ENCODE measurements at regions of chr18 and their contacts with region 1.

Region 1: DNA sequence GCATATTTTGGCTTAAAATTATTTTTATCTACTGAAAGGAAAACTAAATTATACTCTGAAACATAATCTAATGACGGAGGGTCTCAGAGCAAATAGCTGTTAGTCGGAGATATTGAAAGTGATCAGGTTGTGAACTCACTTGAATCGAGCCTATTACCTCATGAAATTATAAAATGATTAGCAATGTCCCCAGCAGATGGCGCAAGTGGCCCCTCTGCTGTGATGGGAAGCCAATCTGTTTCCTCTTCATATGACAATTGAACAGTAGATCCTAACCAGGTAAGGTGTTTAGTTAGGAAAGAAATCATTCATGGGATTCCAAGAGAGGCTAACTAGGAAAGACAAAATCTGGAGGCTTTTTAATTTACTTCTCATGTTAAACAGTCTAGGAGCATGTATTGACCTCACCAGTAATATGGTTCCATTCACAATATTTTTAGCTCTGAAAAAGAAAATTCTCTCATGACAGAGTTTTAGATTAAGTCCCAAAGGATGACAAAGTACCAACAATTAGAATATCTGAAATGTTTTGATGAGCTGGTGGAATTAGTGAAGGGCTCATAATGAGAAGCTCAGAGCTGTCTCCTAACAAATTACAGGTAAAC is 29.9 kb upstream of the MPPE1 start:
- DNase-seq: peak; percentile 78
- H3K4me3 ChIP-seq: no peak overlapping the region
- H3K27ac ChIP-seq: no peak overlapping the region
- H3K4me1 ChIP-seq: no peaks in the 10 kb centered on the region
- H3K27me3 ChIP-seq: no peaks in the 10 kb centered on the region
- CTCF ChIP-seq: peak; percentile 60 to 64
- POLR2A ChIP-seq: no peak

Region 2: DNA sequence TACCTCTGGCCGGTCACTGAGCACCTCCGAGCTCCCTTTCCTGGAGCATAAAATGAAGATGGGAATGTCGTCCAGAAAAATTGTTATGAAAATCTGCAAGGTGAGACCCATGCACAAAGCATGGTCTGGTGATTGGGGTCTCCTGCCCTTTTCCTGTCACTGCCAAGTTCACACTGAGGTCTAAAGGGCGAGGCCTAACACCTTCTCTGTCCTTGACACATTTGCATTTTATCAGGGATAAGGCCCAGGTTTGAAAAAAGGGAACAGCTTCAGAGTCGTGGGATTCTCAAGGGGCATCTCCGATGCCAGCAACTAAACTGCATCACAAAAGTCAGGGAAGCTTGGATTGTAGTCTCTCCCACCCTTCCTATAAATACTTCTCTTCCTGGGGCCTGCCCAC is 224.2 kb before region 1 on chr18:
- CTCF ChIA-PET with region 1: no interaction called
- POLR2A ChIA-PET with region 1: no interaction called
- dilution Hi-C with region 1: no loop called
- intact Hi-C with region 1: no loop called
- DNase-seq: no peak
- H3K4me3 ChIP-seq: no peak overlapping the region
- H3K27ac ChIP-seq: no peak overlapping the region
- H3K4me1 ChIP-seq: no peaks in the 10 kb centered on the region
- H3K27me3 ChIP-seq: no peaks in the 10 kb centered on the region
- CTCF ChIP-seq: no peak
- POLR2A ChIP-seq: no peak

Region 3: GRCh38 chr18:11733031-11733430 is 204.9 kb before region 1 on chr18:
- CTCF ChIA-PET with region 1: interaction called, 15 read pairs
- POLR2A ChIA-PET with region 1: no interaction called
- dilution Hi-C with region 1: no loop called
- intact Hi-C with region 1: loop called (anchors 2 kb)
- DNase-seq: peak; percentile 60
- H3K4me3 ChIP-seq: no peak overlapping the region
- H3K27ac ChIP-seq: no peak overlapping the region
- H3K4me1 ChIP-seq: no peaks in the 10 kb centered on the region
- H3K27me3 ChIP-seq: peaks cover 0 to 2% of the 10 kb centered on the region in 2 experiments
- CTCF ChIP-seq: peak; percentile 86 to 96
- POLR2A ChIP-seq: no peak

Region 4: GRCh38 chr18:11962597-11962996 is 24.6 kb after region 1 on chr18:
- CTCF ChIA-PET with region 1: interaction called, 11 read pairs
- POLR2A ChIA-PET with region 1: interaction called, 4 read pairs
- dilution Hi-C with region 1: no loop called
- intact Hi-C with region 1: no loop called
- DNase-seq: no peak
- H3K4me3 ChIP-seq: no peak overlapping the region
- H3K27ac ChIP-seq: no peak overlapping the region
- H3K4me1 ChIP-seq: no peaks in the 10 kb centered on the region
- H3K27me3 ChIP-seq: no peaks in the 10 kb centered on the region
- CTCF ChIP-seq: no peak
- POLR2A ChIP-seq: no peak

Region 5: GRCh38 chr18:11995445-11996189 is 57.6 kb after region 1 on chr18:
- CTCF ChIA-PET with region 1: interaction called, 717 read pairs
- POLR2A ChIA-PET with region 1: no interaction called
- dilution Hi-C with region 1: no loop called
- intact Hi-C with region 1: loop called (anchors 1 kb)
- DNase-seq: peak; percentile 82
- H3K4me3 ChIP-seq: no peak overlapping the region
- H3K27ac ChIP-seq: no peak overlapping the region
- H3K4me1 ChIP-seq: peaks cover 6% of the 10 kb centered on the region
- H3K27me3 ChIP-seq: no peaks in the 10 kb centered on the region
- CTCF ChIP-seq: peak; percentile 78 to 80
- POLR2A ChIP-seq: no peak

Region 6: DNA sequence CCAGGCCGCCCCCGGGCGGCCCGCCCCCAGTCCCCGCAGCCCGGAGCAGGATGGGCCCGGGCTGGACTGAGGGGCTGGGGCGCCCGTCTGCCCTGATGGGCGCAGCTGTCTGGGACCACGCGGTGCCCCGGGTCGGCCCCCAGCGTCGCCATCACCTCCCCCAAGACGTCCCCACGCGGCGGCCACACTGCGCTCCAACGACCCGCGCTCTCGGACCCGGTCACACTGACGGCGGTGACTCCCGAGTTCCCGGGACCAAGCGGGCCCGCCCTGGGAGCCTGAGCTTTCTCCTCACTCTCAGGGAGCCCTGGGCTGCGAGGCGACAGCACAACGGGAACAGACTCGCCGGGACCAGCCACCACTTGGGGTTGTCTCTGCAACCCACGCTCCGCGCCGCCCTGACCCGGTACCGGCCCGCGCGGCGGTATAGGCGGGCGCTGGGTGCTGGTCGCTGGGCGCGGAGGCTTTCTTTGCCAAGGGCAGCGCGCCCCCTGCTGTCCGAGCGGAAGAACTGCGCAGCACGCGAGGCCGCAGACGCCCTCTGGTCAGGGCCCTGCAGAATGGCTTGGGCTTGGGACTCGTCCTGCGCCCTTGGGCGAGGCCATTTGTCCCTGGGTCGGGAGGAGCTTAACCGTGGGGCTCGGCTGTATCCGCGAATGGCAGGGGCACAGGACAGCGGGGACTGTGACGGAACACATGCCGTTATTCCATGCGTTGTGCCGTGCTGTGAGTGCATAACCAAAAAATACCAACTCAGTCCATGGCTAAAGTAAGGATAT is 100.9 kb after region 1 on chr18:
- CTCF ChIA-PET with region 1: interaction called, 159 read pairs
- POLR2A ChIA-PET with region 1: no interaction called
- dilution Hi-C with region 1: no loop called
- intact Hi-C with region 1: loop called (anchors 1 kb)
- DNase-seq: peak; percentile 70
- H3K4me3 ChIP-seq: peak overlapping the region in 2 of 3 experiments; percentile 52 to 57
- H3K27ac ChIP-seq: no peak overlapping the region
- H3K4me1 ChIP-seq: peaks cover 2% of the 10 kb centered on the region
- H3K27me3 ChIP-seq: peaks cover 5 to 7% of the 10 kb centered on the region in 2 experiments
- CTCF ChIP-seq: peak; percentile 97 to 99
- POLR2A ChIP-seq: no peak

Region 7: GRCh38 chr18:12236934-12237832 is 299.2 kb after region 1 on chr18:
- CTCF ChIA-PET with region 1: no interaction called
- POLR2A ChIA-PET with region 1: no interaction called
- dilution Hi-C with region 1: no loop called
- intact Hi-C with region 1: loop called (anchors 1 kb)
- DNase-seq: peak; percentile 63
- H3K4me3 ChIP-seq: no peak overlapping the region
- H3K27ac ChIP-seq: no peak overlapping the region
- H3K4me1 ChIP-seq: peaks cover 12% of the 10 kb centered on the region
- H3K27me3 ChIP-seq: peaks cover 11 to 19% of the 10 kb centered on the region in 2 experiments
- CTCF ChIP-seq: peak; percentile 95 to 99
- POLR2A ChIP-seq: no peak